ENCODE measurements at regions of chr7 and their contacts with region 1.

Region 1: GRCh38 chr7:110442381-110442837 is 648.5 kb upstream of the LRRN3 start:
- DNase-seq: peak; percentile 62 to 71
- H3K4me3 ChIP-seq: no peak overlapping the region
- H3K4me3 Mint-ChIP-seq: no peak overlapping the region
- H3K27ac Mint-ChIP-seq: no peak overlapping the region
- H3K4me1 ChIP-seq: no peaks in the 10 kb centered on the region
- H3K4me1 Mint-ChIP-seq: no peaks in the 10 kb centered on the region
- H3K27me3 ChIP-seq: no peaks in the 10 kb centered on the region
- H3K27me3 Mint-ChIP-seq: no peaks in the 10 kb centered on the region
- CTCF ChIP-seq: peak; percentile 61 to 65

Region 2: DNA sequence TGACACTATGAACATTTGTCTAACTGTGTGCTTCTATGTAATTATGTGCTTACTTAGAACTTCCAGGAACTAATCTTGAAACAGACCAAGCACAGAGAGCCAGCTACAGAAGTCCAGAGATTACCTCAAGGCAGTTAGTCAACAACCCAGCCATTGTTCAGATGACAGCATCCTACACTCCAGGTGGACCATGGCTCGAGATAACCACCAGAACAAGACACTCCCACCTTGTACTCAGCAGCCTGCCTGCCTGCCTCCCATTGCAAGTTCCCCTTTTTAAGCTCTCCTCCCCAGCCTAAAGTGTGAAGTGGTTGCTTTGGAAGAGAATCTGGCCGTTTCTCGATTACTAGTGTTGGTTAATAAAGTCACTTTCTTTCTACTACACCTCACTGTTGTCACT is 432.1 kb before region 1 on chr7:
- CTCF ChIA-PET with region 1: no interaction called
- POLR2A ChIA-PET with region 1: no interaction called
- intact Hi-C with region 1: loop called (anchors 10 kb)
- DNase-seq: peak in 1 of 2 experiments; percentile 10
- H3K4me3 ChIP-seq: no peak overlapping the region
- H3K4me3 Mint-ChIP-seq: no peak overlapping the region
- H3K27ac Mint-ChIP-seq: no peak overlapping the region
- H3K4me1 ChIP-seq: peaks cover 10% of the 10 kb centered on the region; the same call in 1 of the 2 replicates
- H3K4me1 Mint-ChIP-seq: peaks cover 16% of the 10 kb centered on the region
- H3K27me3 ChIP-seq: no peaks in the 10 kb centered on the region
- H3K27me3 Mint-ChIP-seq: no peaks in the 10 kb centered on the region
- CTCF ChIP-seq: no peak

Region 3: DNA sequence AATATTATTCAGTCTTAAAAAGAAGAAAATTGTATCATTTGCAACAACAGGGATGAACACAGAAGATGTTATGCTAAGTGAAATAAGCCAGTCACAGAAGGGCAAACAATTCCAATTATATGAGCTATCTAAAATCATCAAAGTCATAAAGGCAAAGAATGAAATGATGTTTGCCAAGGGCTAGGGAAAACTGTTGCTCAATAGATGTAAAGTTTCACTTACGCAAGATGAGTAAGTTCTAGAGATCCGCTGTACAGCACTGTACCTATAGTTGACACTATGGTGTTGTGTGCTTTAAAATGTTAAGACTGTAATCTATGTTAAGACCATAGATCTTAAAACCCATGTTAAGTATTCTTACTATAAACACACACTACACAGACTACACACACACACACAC is 256.1 kb before region 1 on chr7:
- CTCF ChIA-PET with region 1: no interaction called
- POLR2A ChIA-PET with region 1: no interaction called
- intact Hi-C with region 1: loop called (anchors 1 kb)
- DNase-seq: peak in 1 of 2 experiments; percentile 57
- H3K4me3 ChIP-seq: no peak overlapping the region
- H3K4me3 Mint-ChIP-seq: no peak overlapping the region
- H3K27ac Mint-ChIP-seq: no peak overlapping the region
- H3K4me1 ChIP-seq: peaks cover 10% of the 10 kb centered on the region
- H3K4me1 Mint-ChIP-seq: no peaks in the 10 kb centered on the region
- H3K27me3 ChIP-seq: no peaks in the 10 kb centered on the region
- H3K27me3 Mint-ChIP-seq: no peaks in the 10 kb centered on the region
- CTCF ChIP-seq: no peak

Region 4: DNA sequence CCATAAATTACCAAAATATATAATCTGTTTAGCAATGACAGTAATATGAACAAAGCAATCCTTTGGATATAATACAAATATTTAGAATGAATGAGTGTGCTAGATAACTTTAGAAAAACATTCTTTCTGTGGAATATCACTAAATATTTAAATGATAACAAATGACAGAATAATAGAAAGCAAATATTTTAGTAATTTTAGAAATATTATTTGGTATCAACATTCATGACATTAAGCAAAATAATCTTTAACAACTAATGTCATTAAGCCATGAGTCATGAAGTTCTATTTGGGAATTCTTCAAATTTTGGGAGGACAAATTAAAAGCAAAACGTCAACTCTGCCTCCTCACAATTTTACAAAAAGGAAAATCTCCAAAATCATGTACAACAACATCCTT is 196.3 kb before region 1 on chr7:
- CTCF ChIA-PET with region 1: no interaction called
- POLR2A ChIA-PET with region 1: no interaction called
- intact Hi-C with region 1: no loop called
- DNase-seq: no peak
- H3K4me3 ChIP-seq: no peak overlapping the region
- H3K4me3 Mint-ChIP-seq: no peak overlapping the region
- H3K27ac Mint-ChIP-seq: no peak overlapping the region
- H3K4me1 ChIP-seq: no peaks in the 10 kb centered on the region
- H3K4me1 Mint-ChIP-seq: no peaks in the 10 kb centered on the region
- H3K27me3 ChIP-seq: no peaks in the 10 kb centered on the region
- H3K27me3 Mint-ChIP-seq: no peaks in the 10 kb centered on the region
- CTCF ChIP-seq: no peak

Region 5: GRCh38 chr7:110283082-110283481 is 159.3 kb before region 1 on chr7:
- CTCF ChIA-PET with region 1: no interaction called
- POLR2A ChIA-PET with region 1: no interaction called
- intact Hi-C with region 1: loop called (anchors 2 kb)
- DNase-seq: peak; percentile 42 to 59
- H3K4me3 ChIP-seq: no peak overlapping the region
- H3K4me3 Mint-ChIP-seq: no peak overlapping the region
- H3K27ac Mint-ChIP-seq: no peak overlapping the region
- H3K4me1 ChIP-seq: peaks cover 30% of the 10 kb centered on the region
- H3K4me1 Mint-ChIP-seq: peaks cover 26% of the 10 kb centered on the region
- H3K27me3 ChIP-seq: no peaks in the 10 kb centered on the region
- H3K27me3 Mint-ChIP-seq: no peaks in the 10 kb centered on the region
- CTCF ChIP-seq: no peak

Region 6: GRCh38 chr7:110386914-110387313 is 55.5 kb before region 1 on chr7:
- CTCF ChIA-PET with region 1: no interaction called
- POLR2A ChIA-PET with region 1: no interaction called
- intact Hi-C with region 1: loop called (anchors 1 kb)
- DNase-seq: peak; percentile 65 to 81
- H3K4me3 ChIP-seq: no peak overlapping the region
- H3K4me3 Mint-ChIP-seq: no peak overlapping the region
- H3K27ac Mint-ChIP-seq: peak overlapping the region; percentile 74
- H3K4me1 ChIP-seq: peaks cover 21% of the 10 kb centered on the region
- H3K4me1 Mint-ChIP-seq: peaks cover 44% of the 10 kb centered on the region
- H3K27me3 ChIP-seq: no peaks in the 10 kb centered on the region
- H3K27me3 Mint-ChIP-seq: no peaks in the 10 kb centered on the region
- CTCF ChIP-seq: no peak

Region 7: GRCh38 chr7:110587304-110587703 is 144.9 kb after region 1 on chr7:
- CTCF ChIA-PET with region 1: no interaction called
- POLR2A ChIA-PET with region 1: no interaction called
- intact Hi-C with region 1: no loop called
- DNase-seq: no peak
- H3K4me3 ChIP-seq: no peak overlapping the region
- H3K4me3 Mint-ChIP-seq: no peak overlapping the region
- H3K27ac Mint-ChIP-seq: no peak overlapping the region
- H3K4me1 ChIP-seq: no peaks in the 10 kb centered on the region
- H3K4me1 Mint-ChIP-seq: no peaks in the 10 kb centered on the region
- H3K27me3 ChIP-seq: no peaks in the 10 kb centered on the region
- H3K27me3 Mint-ChIP-seq: no peaks in the 10 kb centered on the region
- CTCF ChIP-seq: no peak

Region 8: DNA sequence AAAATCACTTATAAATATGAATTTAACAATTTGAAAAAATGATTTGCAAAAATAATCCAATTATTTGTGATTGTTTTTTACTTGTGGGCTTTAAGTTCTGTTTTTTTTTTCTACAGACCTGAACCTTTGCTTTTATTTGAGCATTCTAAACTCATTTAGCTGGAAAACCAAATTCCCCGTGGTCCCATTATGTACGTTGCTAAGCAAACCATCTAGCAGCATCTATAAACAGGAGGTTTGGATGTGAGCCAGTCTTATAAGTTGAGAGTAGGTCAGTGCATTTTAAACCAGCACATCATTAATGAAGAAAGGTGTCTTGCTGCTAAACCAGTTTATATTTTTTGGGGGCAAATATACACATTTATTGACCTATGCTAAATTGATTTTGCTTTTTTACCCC is 725.8 kb after region 1 on chr7:
- CTCF ChIA-PET with region 1: no interaction called
- POLR2A ChIA-PET with region 1: no interaction called
- intact Hi-C with region 1: no loop called
- DNase-seq: no peak
- H3K4me3 ChIP-seq: no peak overlapping the region
- H3K4me3 Mint-ChIP-seq: no peak overlapping the region
- H3K27ac Mint-ChIP-seq: no peak overlapping the region
- H3K4me1 ChIP-seq: 0 out of 2 replicates have a peak, but pooled peaks cover 4% of the 10 kb centered on the region
- H3K4me1 Mint-ChIP-seq: peaks cover 6% of the 10 kb centered on the region
- H3K27me3 ChIP-seq: no peaks in the 10 kb centered on the region
- H3K27me3 Mint-ChIP-seq: no peaks in the 10 kb centered on the region
- CTCF ChIP-seq: no peak